CD4-positive, alpha-beta T cell (primary cell): ENCODE measurements at regions of chr9 and their contacts with region 1.

Region 1: GRCh38 chr9:100150214-100150613 is 51.2 kb downstream of the INVS start:
- DNase-seq: no peak
- ATAC-seq: no peak
- H3K4me3 ChIP-seq: no peak overlapping the region
- H3K4me3 Mint-ChIP-seq: no peak overlapping the region
- H3K27ac ChIP-seq: no peak overlapping the region
- H3K27ac Mint-ChIP-seq: no peak overlapping the region
- H3K4me1 ChIP-seq: no peaks in the 10 kb centered on the region
- H3K4me1 Mint-ChIP-seq: no peaks in the 10 kb centered on the region
- H3K27me3 ChIP-seq: no peaks in the 10 kb centered on the region
- H3K27me3 Mint-ChIP-seq: no peaks in the 10 kb centered on the region
- CTCF ChIP-seq: no peak

Region 2: DNA sequence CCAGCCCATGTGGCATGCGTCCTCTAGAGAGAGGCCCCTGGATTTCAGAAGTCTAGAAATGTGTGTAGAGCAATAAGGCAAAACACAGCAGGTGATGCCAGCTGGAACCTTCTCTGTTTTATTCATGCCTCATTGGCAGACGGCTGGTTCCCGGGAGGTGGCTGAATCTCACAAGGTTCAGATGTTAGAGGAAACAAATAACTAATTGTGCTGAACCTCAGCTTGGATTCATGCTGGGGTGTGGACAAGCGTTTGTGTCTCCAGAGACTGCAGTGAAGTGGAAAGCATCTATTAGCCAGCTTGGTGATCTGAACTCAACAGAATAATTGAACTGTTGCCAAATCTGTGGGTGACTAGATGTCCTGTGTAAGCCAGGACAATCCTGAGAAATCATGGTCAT is 459.6 kb before region 1 on chr9:
- CTCF ChIA-PET with region 1: no interaction called
- POLR2A ChIA-PET with region 1: no interaction called
- intact Hi-C with region 1: no loop called
- DNase-seq: no peak
- ATAC-seq: no peak
- H3K4me3 ChIP-seq: no peak overlapping the region
- H3K4me3 Mint-ChIP-seq: no peak overlapping the region
- H3K27ac ChIP-seq: no peak overlapping the region
- H3K27ac Mint-ChIP-seq: no peak overlapping the region
- H3K4me1 ChIP-seq: no peaks in the 10 kb centered on the region
- H3K4me1 Mint-ChIP-seq: no peaks in the 10 kb centered on the region
- H3K27me3 ChIP-seq: no peaks in the 10 kb centered on the region
- H3K27me3 Mint-ChIP-seq: peaks cover 10% of the 10 kb centered on the region
- CTCF ChIP-seq: no peak

Region 3: DNA sequence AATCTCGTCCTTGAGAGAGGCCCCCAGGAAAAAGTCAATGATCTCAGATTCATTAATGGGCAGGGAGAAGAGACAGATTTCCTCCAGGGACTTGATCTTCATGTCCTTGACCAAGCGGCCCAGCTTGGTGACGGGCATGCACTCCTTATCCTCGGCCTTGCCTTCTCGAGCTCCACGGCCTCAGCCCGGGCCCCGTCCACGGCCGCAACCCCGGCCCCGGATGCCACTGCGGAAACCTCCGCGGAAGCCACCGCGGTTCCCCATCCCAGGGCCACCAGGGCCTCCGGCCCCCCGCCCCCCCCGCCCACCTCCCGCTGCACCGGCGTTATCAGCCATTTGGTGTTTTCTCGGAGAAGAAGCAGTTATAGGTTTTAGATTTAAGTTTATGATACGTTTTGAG is 32.9 kb before region 1 on chr9:
- CTCF ChIA-PET with region 1: no interaction called
- POLR2A ChIA-PET with region 1: no interaction called
- intact Hi-C with region 1: no loop called
- DNase-seq: no peak
- ATAC-seq: no peak
- H3K4me3 ChIP-seq: no peak overlapping the region
- H3K4me3 Mint-ChIP-seq: no peak overlapping the region
- H3K27ac ChIP-seq: no peak overlapping the region
- H3K27ac Mint-ChIP-seq: no peak overlapping the region
- H3K4me1 ChIP-seq: no peaks in the 10 kb centered on the region
- H3K4me1 Mint-ChIP-seq: peaks cover 28% of the 10 kb centered on the region
- H3K27me3 ChIP-seq: no peaks in the 10 kb centered on the region
- H3K27me3 Mint-ChIP-seq: no peaks in the 10 kb centered on the region
- CTCF ChIP-seq: no peak

Region 4: GRCh38 chr9:100129772-100130171 is 20.4 kb before region 1 on chr9:
- CTCF ChIA-PET with region 1: interaction called, 3 read pairs
- POLR2A ChIA-PET with region 1: no interaction called
- intact Hi-C with region 1: loop called in 1 of 2 experiments (anchors 2 kb)
- DNase-seq: no peak
- ATAC-seq: no peak
- H3K4me3 ChIP-seq: no peak overlapping the region
- H3K4me3 Mint-ChIP-seq: no peak overlapping the region
- H3K27ac ChIP-seq: no peak overlapping the region
- H3K27ac Mint-ChIP-seq: no peak overlapping the region
- H3K4me1 ChIP-seq: no peaks in the 10 kb centered on the region
- H3K4me1 Mint-ChIP-seq: no peaks in the 10 kb centered on the region
- H3K27me3 ChIP-seq: no peaks in the 10 kb centered on the region
- H3K27me3 Mint-ChIP-seq: no peaks in the 10 kb centered on the region
- CTCF ChIP-seq: no peak